ENCODE measurements at regions of chr19 and their contacts with region 1.

Region 1: GRCh38 chr19:9309139-9309973 is at the start of gene ZNF699:
- DNase-seq: peak; percentile 99
- H3K4me3 ChIP-seq: peak within 1 kb of the TSS; percentile 86 to 94 (median 89)
- H3K27ac ChIP-seq: peak within 1 kb of the TSS; percentile 93 to 98 (median 98)
- H3K4me1 ChIP-seq: peaks cover 7 to 32% (median 25%) of the 10 kb centered on the region in 4 donors
- H3K27me3 ChIP-seq: no peaks in the 10 kb centered on the region
- CTCF ChIP-seq: peak in 1 of 3 experiments; percentile 17
- EP300 ChIP-seq: no peak
- POLR2A ChIP-seq: peak; percentile 60
- total RNA-seq, gene ZNF699: 14.2 to 19.1 (median 14.8) TPM

Region 2: DNA sequence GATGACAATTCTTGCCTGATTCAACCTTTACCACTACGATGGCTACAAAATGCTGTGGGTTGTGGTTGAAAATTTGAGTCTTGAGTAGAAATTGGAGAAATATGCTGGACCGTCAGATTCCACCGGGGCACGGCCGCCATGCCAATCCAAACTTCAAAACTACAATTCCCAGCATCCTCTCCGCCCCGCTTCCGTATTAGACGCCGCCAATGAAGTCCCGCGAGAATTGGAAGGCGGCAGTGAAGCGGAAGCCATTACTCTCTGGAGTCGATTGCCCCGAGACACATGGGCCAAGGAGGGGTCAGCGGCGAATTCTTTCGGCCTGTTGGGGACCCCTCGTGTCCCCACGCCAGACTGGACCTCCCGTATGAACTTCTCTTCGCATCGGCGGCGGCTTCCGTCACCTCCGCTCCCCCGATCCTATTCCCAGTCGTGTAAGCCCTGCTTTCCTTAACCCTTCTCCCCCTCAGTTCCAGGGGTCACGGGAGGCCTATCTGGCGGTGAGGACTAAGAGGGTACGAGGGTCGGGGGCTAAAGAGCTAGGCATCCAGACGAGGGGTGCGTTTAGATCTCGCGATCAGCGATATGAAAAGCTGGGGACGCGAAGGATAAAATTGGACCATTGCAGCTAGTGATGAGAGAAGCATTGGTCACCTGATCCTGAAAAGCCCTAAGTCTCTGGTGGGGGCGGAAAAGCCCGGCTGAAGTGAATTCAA is 169.0 kb before region 1 on chr19 and contains the start of gene ZNF317:
- intact Hi-C with region 1: loop called (anchors 5 kb)
- DNase-seq: peak; percentile 96
- H3K4me3 ChIP-seq: peak within 1 kb of the TSS; percentile 71 to 88 (median 78)
- H3K27ac ChIP-seq: peak within 1 kb of the TSS; percentile 88 to 93 (median 89)
- H3K4me1 ChIP-seq: peaks cover 15 to 31% (median 28%) of the 10 kb centered on the region in 4 donors
- H3K27me3 ChIP-seq: no peaks in the 10 kb centered on the region
- CTCF ChIP-seq: peak in 1 of 3 experiments; percentile 5
- EP300 ChIP-seq: no peak
- POLR2A ChIP-seq: peak; percentile 11
- total RNA-seq, gene ZNF317: 17.6 to 24.8 (median 21.5) TPM

Region 3: GRCh38 chr19:9323919-9324583 is 14.7 kb after region 1 on chr19 and contains the start of gene ZNF559:
- intact Hi-C with region 1: loop called (anchors 2 kb)
- DNase-seq: peak; percentile 98
- H3K4me3 ChIP-seq: peak within 1 kb of the TSS; percentile 66 to 87 (median 72)
- H3K27ac ChIP-seq: peak within 1 kb of the TSS; percentile 85 to 92 (median 90)
- H3K4me1 ChIP-seq: peaks cover 7 to 20% (median 17%) of the 10 kb centered on the region in 4 donors
- H3K27me3 ChIP-seq: no peaks in the 10 kb centered on the region
- CTCF ChIP-seq: peak in 2 of 3 experiments; percentile 16 to 23
- EP300 ChIP-seq: no peak
- POLR2A ChIP-seq: no peak
- total RNA-seq, gene ZNF559: 8.8 to 18.9 (median 18.6) TPM

Region 4: DNA sequence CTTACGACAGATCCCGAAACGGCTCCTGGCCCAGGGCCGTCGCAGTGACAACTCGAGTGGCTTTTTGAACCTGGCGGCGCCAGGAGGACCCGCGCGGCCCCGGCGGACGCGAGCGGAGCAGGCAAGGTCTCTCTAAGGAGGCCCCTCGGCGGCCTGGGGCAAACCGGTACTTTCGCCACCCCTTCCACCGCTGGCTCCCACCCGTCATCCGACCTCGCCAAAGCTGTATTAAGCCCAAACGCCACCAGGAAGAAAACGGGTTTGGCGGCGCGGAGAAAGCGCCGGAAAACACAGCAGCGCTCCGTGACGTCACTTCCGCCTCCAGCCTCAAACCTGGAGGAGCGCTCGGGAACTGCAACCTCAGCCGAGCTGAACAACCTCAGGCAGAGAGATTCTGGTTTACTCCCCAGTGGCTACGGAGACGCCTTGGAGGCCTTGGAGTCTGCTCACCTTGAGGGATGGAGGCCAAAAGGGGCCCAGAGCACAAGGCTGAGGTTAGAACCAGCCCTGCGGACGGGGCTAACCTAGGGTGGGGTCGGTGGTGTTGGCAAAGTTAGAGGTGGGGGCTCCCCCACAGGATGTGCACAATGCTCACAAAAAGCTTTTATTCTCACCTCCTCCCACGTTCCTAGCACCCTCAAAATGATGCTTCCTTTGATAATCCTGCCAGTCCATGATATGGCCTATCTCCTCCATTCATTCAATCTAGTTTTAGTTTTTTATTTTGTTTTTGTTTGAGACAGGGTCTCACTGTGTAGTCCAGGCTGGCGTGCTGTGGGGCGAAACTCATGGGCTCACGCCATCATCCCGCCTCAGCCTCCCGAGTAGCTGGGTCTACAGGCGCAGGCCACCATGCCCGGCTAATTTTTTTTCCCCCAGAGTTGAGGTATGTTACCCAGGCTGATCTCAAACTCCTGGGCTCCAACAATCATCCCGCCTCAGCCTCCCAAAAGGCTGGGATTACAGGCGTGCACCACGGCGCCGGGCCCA is 126.2 kb after region 1 on chr19 and contains the start of gene ZNF266:
- intact Hi-C with region 1: loop called (anchors 5 kb)
- DNase-seq: peak; percentile 96
- H3K4me3 ChIP-seq: peak within 1 kb of the TSS; percentile 72 to 94 (median 82)
- H3K27ac ChIP-seq: peak within 1 kb of the TSS; percentile 88 to 91 (median 89)
- H3K4me1 ChIP-seq: peaks cover 19 to 25% (median 21%) of the 10 kb centered on the region in 4 donors
- H3K27me3 ChIP-seq: no peaks in the 10 kb centered on the region
- CTCF ChIP-seq: peak; percentile 69 to 93 (median 75)
- EP300 ChIP-seq: no peak
- POLR2A ChIP-seq: no peak
- total RNA-seq, gene ZNF266: 12.0 to 18.1 (median 16.6) TPM

Region 5: GRCh38 chr19:9538183-9539058 is 229.1 kb after region 1 on chr19 and contains the start of gene ZNF426:
- intact Hi-C with region 1: no loop called
- DNase-seq: peak; percentile 94
- H3K4me3 ChIP-seq: peak within 1 kb of the TSS; percentile 67 to 87 (median 78)
- H3K27ac ChIP-seq: peak within 1 kb of the TSS; percentile 90 to 96 (median 94)
- H3K4me1 ChIP-seq: peaks cover 14 to 26% (median 20%) of the 10 kb centered on the region in 4 donors
- H3K27me3 ChIP-seq: no peaks in the 10 kb centered on the region
- CTCF ChIP-seq: no peak
- EP300 ChIP-seq: no peak
- POLR2A ChIP-seq: no peak
- total RNA-seq, gene ZNF426: 13.7 to 19.4 (median 17.5) TPM

Measured in esophagus muscularis mucosa (tissue), 4 donors.